Vagina (tissue), 2 donors: ENCODE measurements at regions of chr4 and their contacts with region 1.

Region 1: DNA sequence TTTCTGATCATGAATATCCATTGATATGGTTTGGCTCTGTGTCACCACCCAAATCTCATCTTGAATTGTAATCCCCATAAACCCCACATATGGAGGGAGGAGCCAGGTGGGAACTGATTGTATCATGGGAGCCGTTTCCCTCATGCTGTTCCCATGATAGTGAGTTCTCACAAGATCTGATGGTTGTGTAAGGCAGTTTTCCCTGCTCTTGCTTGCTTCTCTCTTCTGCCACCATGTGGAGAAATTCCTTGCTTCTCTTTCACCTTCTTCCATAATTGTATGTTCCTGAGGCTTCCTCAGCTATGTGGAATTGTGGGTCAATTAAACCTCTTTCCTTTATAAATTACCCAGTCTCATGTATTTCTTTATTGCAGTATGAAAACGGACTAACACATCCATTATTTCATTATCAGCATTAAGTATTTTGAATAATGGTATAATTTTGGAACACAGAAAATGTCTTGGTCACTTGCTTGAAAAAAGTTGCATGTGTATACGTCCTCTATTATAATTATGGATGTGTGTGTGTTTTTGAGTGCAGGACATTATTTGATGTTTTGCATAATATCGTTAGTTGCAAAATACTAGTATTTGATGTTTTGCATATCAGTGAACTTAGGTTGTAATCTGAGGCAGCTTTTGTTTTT is 334.6 kb downstream of the PCDH10 start:
- DNase-seq: no peak
- H3K4me3 ChIP-seq: no peak overlapping the region
- H3K27ac ChIP-seq: no peak overlapping the region
- H3K4me1 ChIP-seq: no peaks in the 10 kb centered on the region
- H3K27me3 ChIP-seq: no peaks in the 10 kb centered on the region
- CTCF ChIP-seq: no peak
- POLR2A ChIP-seq: no peak

Region 2: DNA sequence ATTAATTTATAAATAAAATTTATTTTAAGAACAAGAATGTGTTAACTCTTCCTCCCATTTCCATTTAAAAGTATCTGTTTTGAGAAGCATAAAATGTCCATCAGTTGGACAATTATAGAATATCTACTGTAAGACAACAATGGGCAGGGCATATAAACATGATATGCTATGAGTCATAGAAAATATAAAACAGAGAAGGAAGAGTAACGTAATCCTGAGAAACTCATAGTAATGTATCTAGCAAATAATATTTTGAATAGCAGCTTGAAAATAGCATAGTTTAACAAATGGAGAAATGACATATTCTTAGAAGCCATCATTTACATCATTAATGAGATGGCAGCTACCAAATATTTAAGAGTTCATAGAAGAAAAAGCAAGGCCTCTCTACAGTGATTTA is 1155.0 kb before region 1 on chr4:
- intact Hi-C with region 1: loop called (anchors 10 kb)
- DNase-seq: no peak
- H3K4me3 ChIP-seq: no peak overlapping the region
- H3K27ac ChIP-seq: no peak overlapping the region
- H3K4me1 ChIP-seq: no peaks in the 10 kb centered on the region
- H3K27me3 ChIP-seq: no peaks in the 10 kb centered on the region
- CTCF ChIP-seq: no peak
- POLR2A ChIP-seq: no peak

Region 3: GRCh38 chr4:132763465-132763864 is 720.3 kb before region 1 on chr4:
- intact Hi-C with region 1: no loop called
- DNase-seq: no peak
- H3K4me3 ChIP-seq: no peak overlapping the region
- H3K27ac ChIP-seq: no peak overlapping the region
- H3K4me1 ChIP-seq: no peaks in the 10 kb centered on the region
- H3K27me3 ChIP-seq: no peaks in the 10 kb centered on the region
- CTCF ChIP-seq: no peak
- POLR2A ChIP-seq: no peak